WTC11 (cell line): ENCODE measurements at regions of chr22 and their contacts with region 1.

Region 1: GRCh38 chr22:41957941-41958556 is 6.1 kb downstream of the SMIM45 start:
- DNase-seq: no peak
- ATAC-seq: peak; percentile 64
- H3K4me3 Mint-ChIP-seq: peak overlapping the region; percentile 56
- H3K27ac Mint-ChIP-seq: no peak overlapping the region
- H3K4me1 Mint-ChIP-seq: peaks cover 13% of the 10 kb centered on the region
- H3K27me3 Mint-ChIP-seq: peaks cover 40% of the 10 kb centered on the region
- CTCF ChIP-seq: no peak

Region 2: GRCh38 chr22:41946629-41947423 is 11.2 kb before region 1 on chr22 and contains the start of gene CENPM:
- CTCF ChIA-PET with region 1: interaction called, 14 read pairs
- POLR2A ChIA-PET with region 1: interaction called, 3 read pairs
- DNase-seq: peak; percentile 95
- ATAC-seq: peak; percentile 93
- H3K4me3 Mint-ChIP-seq: peak within 1 kb of the TSS; percentile 73
- H3K27ac Mint-ChIP-seq: peak within 1 kb of the TSS; percentile 49; the same call in 1 of the 2 replicates
- H3K4me1 Mint-ChIP-seq: peaks cover 46% of the 10 kb centered on the region
- H3K27me3 Mint-ChIP-seq: peaks cover 4% of the 10 kb centered on the region; the same call in 1 of the 2 replicates
- CTCF ChIP-seq: no peak
- total RNA-seq, gene CENPM: 40.3 to 43.7 TPM (median 41.7 TPM) in 3 replicates

Region 3: DNA sequence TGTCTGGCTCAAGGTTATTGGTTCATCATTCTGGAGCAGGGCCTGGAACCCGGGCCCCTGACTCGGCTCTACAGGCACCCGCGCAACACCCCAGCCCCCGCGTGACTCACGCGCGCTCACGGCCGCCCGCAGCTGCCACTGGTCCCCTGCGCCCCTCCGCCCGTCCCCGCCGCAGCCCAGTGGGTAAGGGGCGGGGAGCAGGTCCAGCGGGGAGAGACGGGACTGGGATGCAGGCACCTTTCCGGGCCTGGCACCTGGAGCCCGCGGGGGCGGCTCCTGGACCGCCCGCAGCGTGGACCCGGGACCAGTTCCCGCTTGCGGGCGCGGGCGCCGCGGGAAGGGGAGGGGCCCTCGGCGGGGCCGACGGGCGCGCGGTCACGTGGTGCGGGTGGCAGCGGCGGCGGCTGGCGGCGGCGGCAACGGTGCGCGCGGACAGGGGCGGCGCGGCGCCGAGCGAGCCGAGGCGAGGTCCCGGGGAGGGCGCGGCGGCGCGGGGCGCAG is 18.4 kb after region 1 on chr22:
- CTCF ChIA-PET with region 1: no interaction called
- POLR2A ChIA-PET with region 1: no interaction called
- DNase-seq: peak; percentile 45
- ATAC-seq: peak; percentile 46
- H3K4me3 Mint-ChIP-seq: peak overlapping the region; percentile 54
- H3K27ac Mint-ChIP-seq: no peak overlapping the region
- H3K4me1 Mint-ChIP-seq: peaks cover 18% of the 10 kb centered on the region
- H3K27me3 Mint-ChIP-seq: peaks cover 55% of the 10 kb centered on the region
- CTCF ChIP-seq: no peak

Region 4: DNA sequence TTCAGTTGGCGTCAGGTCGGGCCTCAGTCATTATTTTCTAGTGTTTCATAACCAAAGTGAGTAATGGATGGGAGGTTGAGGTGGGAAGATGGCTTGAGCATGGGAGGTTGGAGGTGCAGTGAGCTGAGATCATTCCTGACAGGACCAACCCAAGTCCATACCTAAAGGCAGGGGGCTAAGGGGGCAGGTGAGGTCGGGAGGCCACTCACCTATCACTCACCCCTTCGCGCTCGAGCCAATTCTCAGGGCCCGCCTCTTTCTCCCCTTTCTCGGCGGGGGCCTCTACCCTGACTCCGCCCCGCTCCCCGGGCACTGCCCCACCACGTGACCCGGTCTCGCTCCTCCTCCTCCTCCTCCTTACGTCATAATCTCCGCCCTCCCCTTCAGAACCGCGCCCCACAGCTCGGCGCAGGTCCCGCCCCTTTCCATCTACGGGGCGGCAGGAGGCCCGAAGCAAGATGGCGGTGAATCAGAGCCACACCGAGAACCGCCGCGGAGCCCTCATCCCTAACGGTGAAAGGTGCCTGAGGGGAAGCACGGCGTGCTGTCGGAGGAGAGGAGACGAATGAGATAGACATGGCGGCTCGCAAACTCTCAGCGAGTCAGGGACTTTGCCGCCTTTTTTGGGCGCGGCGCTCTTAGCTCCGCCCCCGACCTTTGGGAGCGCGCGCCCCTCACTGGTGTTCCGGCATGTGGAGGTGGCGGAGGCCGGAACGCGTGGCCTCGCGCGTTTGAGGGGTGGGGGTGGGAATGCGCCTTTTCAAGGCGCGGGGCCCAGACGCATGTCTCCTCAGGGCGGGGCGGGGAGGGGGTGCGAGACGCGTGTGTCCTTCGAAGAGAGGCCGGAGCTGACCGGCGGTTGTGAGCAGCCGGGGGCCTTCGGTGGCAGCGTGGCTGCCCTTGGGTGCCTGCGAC is 40.6 kb after region 1 on chr22 and contains the start of gene WBP2NL:
- CTCF ChIA-PET with region 1: no interaction called
- POLR2A ChIA-PET with region 1: no interaction called
- DNase-seq: no peak
- ATAC-seq: peak; percentile 64
- H3K4me3 Mint-ChIP-seq: no peak within 1 kb of the TSS
- H3K27ac Mint-ChIP-seq: no peak within 1 kb of the TSS
- H3K4me1 Mint-ChIP-seq: peaks cover 7% of the 10 kb centered on the region; the same call in 1 of the 2 replicates
- H3K27me3 Mint-ChIP-seq: peaks cover 37% of the 10 kb centered on the region
- CTCF ChIP-seq: no peak
- total RNA-seq, gene WBP2NL: not detected in 3 replicates

Region 5: DNA sequence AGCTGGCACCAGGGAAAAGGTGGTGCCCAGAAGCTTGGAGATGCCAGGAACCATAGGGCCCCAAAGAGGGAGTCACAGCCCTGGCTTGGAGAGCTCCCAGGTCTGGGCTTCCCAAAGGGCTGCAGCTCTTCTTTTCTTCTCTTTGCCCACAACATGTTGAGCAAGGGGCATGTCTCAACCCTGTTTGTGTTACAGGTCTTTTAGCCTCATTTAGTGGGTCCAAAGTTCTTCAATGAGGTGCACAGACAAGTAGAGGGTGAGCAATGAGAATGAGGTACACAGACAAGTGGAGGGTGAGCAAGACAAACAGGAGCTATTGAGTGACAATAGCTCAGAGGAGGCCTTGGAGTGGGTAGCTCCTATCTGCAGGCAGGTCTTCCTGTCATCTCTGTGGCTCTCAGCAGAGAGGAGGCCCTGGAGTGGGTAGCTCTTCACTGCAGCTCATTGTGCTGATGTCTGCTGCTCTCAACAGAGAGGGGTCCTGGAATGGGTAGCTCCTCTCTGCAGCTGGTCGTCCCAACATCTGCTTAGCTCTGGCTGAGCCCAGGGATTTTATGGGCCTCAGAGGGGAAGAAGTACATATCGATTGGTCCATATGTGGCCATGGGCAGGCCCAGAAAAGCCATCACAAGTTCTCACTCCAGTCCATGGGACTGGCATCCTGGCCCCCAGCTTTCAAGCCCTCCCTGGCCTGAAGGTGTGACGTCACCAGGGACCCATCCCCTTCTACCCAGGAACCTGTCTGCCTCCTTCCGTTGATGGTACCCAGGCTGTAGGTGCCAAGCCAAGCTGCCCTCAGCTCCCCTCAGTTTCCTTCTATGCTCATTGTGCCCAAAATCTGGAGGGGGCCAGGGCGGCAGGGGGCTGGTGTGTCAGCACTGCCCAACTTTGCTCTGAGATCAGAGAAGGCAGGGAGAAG is 75.5 kb after region 1 on chr22:
- CTCF ChIA-PET with region 1: no interaction called
- POLR2A ChIA-PET with region 1: no interaction called
- DNase-seq: no peak
- ATAC-seq: no peak
- H3K4me3 Mint-ChIP-seq: no peak overlapping the region
- H3K27ac Mint-ChIP-seq: no peak overlapping the region
- H3K4me1 Mint-ChIP-seq: no peaks in the 10 kb centered on the region
- H3K27me3 Mint-ChIP-seq: peaks cover 36% of the 10 kb centered on the region
- CTCF ChIP-seq: no peak